Ascending aorta (tissue), 2 donors: ENCODE measurements at regions of chr14 and their contacts with region 1.

Region 1: GRCh38 chr14:61547186-61548086 is 147.9 kb upstream of the HIF1A start:
- DNase-seq: peak in 1 of 2 donors; percentile 79
- H3K4me3 ChIP-seq: no peak overlapping the region
- H3K27ac ChIP-seq: peak overlapping the region; percentile 52 to 70
- H3K4me1 ChIP-seq: peaks cover 18 to 25% of the 10 kb centered on the region in 2 donors
- H3K27me3 ChIP-seq: no peaks in the 10 kb centered on the region
- CTCF ChIP-seq: no peak

Region 2: GRCh38 chr14:61561657-61562276 is 14.3 kb after region 1 on chr14:
- intact Hi-C with region 1: loop called (anchors 2 kb)
- DNase-seq: peak; percentile 59 to 91
- H3K4me3 ChIP-seq: no peak overlapping the region
- H3K27ac ChIP-seq: peak overlapping the region; percentile 66 to 71
- H3K4me1 ChIP-seq: peaks cover 0 to 12% of the 10 kb centered on the region in 2 donors
- H3K27me3 ChIP-seq: no peaks in the 10 kb centered on the region
- CTCF ChIP-seq: no peak